ENCODE measurements at regions of chr13 and their contacts with region 1.

Region 1: DNA sequence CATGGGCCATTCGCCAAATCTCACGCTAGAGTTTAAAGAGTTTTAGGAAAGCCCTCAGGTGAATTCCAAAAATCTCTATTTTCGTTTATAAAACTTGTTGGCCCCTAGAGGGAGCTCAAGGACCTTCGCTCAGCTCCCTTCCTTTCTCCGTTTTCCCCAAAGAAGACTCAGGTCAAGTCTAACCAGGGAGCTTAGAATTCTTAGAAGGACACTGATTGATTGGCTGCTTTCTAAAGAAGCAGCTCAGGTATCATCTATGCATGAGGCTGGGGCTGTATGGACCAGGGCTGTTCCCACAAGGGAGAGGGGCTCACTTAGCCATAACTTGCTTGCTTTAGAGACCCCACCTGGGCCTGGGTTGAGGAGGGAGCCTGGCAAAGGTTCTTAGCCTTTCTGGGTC is 20.5 kb downstream of the DZIP1 start:
- DNase-seq: peak; percentile 31
- H3K4me3 Mint-ChIP-seq: no peak overlapping the region
- H3K27ac Mint-ChIP-seq: no peak overlapping the region
- H3K4me1 Mint-ChIP-seq: no peaks in the 10 kb centered on the region
- H3K27me3 Mint-ChIP-seq: peaks cover 22% of the 10 kb centered on the region

Region 2: GRCh38 chr13:95660981-95661581 is 37.1 kb after region 1 on chr13:
- CTCF ChIA-PET with region 1: interaction called, 24 read pairs
- DNase-seq: no peak
- H3K4me3 Mint-ChIP-seq: no peak overlapping the region
- H3K27ac Mint-ChIP-seq: no peak overlapping the region
- H3K4me1 Mint-ChIP-seq: no peaks in the 10 kb centered on the region
- H3K27me3 Mint-ChIP-seq: peaks cover 11% of the 10 kb centered on the region

Region 3: GRCh38 chr13:95834134-95834765 is 210.2 kb after region 1 on chr13:
- CTCF ChIA-PET with region 1: interaction called, 96 read pairs
- DNase-seq: peak; percentile 71
- H3K4me3 Mint-ChIP-seq: no peak overlapping the region
- H3K27ac Mint-ChIP-seq: no peak overlapping the region
- H3K4me1 Mint-ChIP-seq: no peaks in the 10 kb centered on the region
- H3K27me3 Mint-ChIP-seq: peaks cover 4% of the 10 kb centered on the region